ENCODE measurements at regions of chr4 and their contacts with region 1.

Region 1: DNA sequence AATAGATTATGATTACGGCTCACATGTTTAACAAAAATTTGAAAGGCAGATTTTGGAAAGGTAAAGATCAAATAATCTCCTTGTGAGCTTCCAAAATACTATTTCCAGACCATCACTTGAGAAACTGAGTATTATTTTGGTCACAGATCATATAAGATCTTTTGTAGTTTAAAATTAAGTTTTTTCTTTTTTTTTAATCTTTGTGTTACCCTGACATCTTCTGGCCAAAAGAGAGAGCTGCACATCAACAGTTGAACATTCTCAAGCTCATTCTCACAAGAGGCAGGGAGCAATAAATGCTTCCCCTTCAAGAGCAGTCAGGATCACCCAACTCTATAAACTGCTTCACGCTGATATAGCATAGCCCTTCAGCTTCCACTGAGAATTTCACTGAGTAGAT is 15.9 kb downstream of the TMEM192 start:
- DNase-seq: no peak
- ATAC-seq: no peak

Region 2: GRCh38 chr4:164779811-164780216 is 317.0 kb before region 1 on chr4:
- intact Hi-C with region 1: loop called (anchors 5 kb)
- DNase-seq: no peak
- ATAC-seq: no peak

Region 3: GRCh38 chr4:165112368-165113139 is 15.8 kb after region 1 on chr4 and contains the start of gene TMEM192:
- intact Hi-C with region 1: no loop called
- DNase-seq: peak; percentile 96
- ATAC-seq: peak; percentile 100
- total RNA-seq, gene TMEM192: 14.9 TPM